ENCODE measurements at regions of chr4 and their contacts with region 1.

Region 1: DNA sequence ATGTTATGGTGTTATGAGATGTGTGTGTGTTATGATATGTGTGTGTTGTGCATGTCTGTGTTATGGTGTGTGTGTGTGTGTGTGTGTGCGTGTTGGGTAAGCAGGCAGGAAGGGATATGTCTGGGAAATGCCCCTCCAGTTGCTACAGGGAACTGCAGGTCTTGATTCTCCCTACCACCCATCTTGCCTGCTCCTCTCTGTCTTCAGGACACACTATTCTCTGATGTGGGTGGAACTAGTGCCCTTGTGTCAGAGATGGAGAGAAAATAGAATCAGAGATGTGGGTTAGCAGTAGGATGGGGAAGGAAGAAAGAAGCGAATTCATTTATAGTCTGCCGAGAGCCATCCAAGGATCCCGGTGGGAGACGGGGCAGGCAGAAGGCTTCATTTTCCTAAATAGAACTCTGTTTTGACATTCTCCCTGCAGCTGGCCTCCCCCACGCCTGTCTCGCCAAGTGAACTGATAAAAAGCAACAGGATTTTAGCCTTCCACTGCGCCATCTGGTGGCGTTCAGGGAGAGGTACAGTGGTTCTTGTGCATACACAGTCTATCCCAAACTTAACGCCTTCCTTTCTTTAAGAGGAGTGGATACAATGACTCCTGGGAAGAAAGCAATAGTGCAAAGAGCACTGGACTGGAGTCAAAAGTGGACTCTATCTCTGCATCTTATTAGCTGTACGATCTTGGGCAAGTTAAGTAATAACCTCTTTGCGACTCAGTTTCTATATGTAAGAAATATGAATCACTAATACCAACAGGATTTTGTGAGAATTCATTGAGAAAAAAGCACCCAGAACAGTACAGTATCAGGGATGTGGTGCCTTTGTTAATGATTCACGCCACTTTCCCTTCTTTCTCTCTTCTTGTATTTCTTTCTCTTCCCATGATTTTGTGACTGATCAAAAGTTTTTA is 14.1 kb upstream of the MGST2 start:
- DNase-seq: peak; percentile 43
- H3K4me3 ChIP-seq: no peak overlapping the region
- H3K27ac ChIP-seq: no peak overlapping the region
- H3K4me1 ChIP-seq: peaks cover 8% of the 10 kb centered on the region
- H3K27me3 ChIP-seq: no peaks in the 10 kb centered on the region
- CTCF ChIP-seq: peak; percentile 91 to 95

Region 2: DNA sequence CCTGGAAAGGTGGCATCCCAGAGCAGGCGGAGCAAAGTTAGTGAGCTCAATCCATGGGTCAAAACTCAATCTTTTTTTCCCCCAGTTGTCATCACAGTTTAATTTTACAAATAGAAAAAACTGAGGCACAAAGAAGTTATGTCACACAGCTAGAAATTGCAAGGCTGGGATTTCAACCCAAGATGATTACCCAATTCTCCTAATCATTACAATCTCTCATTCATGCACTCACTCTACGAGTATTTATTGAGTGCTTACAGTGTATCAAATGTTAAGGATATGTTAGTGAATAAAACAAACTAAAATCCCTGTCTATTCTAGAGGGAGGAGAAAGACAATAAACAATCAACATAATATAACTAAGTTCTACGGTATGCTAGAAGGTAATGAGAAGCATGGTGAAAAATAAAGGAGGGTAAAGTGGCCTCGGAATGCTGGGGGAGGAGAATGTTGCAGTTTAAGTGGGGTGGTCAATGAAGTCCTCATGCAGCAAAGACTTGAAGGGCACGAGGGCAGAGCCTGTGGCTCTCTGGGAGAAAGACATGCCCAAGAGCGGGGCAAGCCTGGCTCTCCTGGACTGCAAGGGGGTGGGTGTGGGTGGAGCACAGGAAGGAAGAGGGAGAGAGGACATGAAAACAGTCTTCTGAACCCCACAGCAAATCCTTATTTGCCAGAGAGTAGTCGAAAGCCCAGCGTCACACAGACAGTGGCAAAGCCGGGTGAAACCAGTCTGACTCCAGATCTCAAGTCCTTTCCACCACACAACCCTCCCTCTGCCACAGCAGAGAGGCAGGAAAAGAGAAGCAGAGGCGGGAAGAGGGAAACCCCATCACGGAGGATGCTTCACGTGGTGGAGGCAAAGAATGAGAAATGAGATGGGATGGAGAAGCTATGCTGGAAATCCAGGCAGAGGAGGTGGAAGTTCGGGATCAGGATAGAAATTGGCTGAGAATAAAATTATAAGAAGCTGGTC is 149.3 kb before region 1 on chr4:
- CTCF ChIA-PET with region 1: no interaction called
- dilution Hi-C with region 1: no loop called
- in situ Hi-C with region 1: no loop called
- intact Hi-C with region 1: loop called (anchors 1 kb)
- DNase-seq: no peak
- H3K4me3 ChIP-seq: no peak overlapping the region
- H3K27ac ChIP-seq: no peak overlapping the region
- H3K4me1 ChIP-seq: no peaks in the 10 kb centered on the region
- H3K27me3 ChIP-seq: no peaks in the 10 kb centered on the region
- CTCF ChIP-seq: no peak

Region 3: GRCh38 chr4:139554893-139555704 is 96.4 kb before region 1 on chr4:
- CTCF ChIA-PET with region 1: interaction called, 3 read pairs
- dilution Hi-C with region 1: no loop called
- in situ Hi-C with region 1: no loop called
- intact Hi-C with region 1: loop called (anchors 2 kb)
- DNase-seq: peak; percentile 81
- H3K4me3 ChIP-seq: peak overlapping the region; percentile 77 to 91 (median 90)
- H3K27ac ChIP-seq: peak overlapping the region; percentile 63
- H3K4me1 ChIP-seq: peaks cover 17% of the 10 kb centered on the region
- H3K27me3 ChIP-seq: peaks cover 5% of the 10 kb centered on the region
- CTCF ChIP-seq: no peak

Region 4: DNA sequence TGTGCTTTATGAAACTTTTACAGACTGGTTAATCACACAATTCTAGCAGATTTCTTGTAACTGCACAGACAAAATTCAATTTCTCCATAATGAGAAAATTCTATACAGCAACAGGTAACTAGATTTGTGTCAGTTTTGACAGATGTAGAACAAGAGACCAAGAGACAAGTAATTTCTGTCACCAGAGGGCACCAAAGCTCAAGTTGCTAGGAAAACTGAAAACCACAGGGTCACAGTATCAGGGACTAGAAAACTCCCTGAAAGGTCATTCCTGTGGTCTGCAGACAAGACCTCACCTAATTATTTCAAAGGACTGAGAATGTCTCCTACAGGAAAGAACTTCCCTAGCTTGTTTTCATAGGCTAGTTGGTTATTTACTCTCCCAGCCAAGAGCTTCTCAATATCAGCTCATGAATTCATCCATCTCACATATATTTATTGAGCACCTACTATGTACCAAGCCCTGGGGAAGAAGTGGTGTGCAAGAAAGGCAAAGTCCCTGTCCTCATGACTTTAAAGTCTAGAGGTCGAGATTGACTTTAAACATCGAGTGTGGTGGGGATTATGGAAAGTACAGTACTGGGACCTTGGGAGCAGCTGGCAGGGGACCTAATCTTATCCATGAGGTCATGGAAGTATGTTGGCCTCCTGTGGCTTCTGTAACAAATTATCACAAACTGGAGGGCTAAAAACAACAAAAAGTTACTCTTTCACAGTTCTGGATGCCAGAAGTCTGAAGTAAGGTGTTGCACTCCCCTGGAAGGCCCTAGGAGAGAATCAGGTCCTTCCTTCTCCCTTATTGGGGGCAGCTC is 47.8 kb before region 1 on chr4:
- CTCF ChIA-PET with region 1: interaction called, 6 read pairs
- dilution Hi-C with region 1: no loop called
- in situ Hi-C with region 1: no loop called
- intact Hi-C with region 1: loop called (anchors 1 kb)
- DNase-seq: peak; percentile 55
- H3K4me3 ChIP-seq: no peak overlapping the region
- H3K27ac ChIP-seq: no peak overlapping the region
- H3K4me1 ChIP-seq: no peaks in the 10 kb centered on the region
- H3K27me3 ChIP-seq: no peaks in the 10 kb centered on the region
- CTCF ChIP-seq: peak; percentile 62 to 73

Region 5: GRCh38 chr4:139619644-139620043 is 31.9 kb before region 1 on chr4:
- CTCF ChIA-PET with region 1: interaction called, 5 read pairs
- dilution Hi-C with region 1: no loop called
- in situ Hi-C with region 1: loop called in 1 of 2 experiments (anchors 5 kb)
- intact Hi-C with region 1: loop called (anchors 1 kb)
- DNase-seq: peak; percentile 30
- H3K4me3 ChIP-seq: no peak overlapping the region
- H3K27ac ChIP-seq: no peak overlapping the region
- H3K4me1 ChIP-seq: no peaks in the 10 kb centered on the region
- H3K27me3 ChIP-seq: no peaks in the 10 kb centered on the region
- CTCF ChIP-seq: peak; percentile 61 to 69

Region 6: DNA sequence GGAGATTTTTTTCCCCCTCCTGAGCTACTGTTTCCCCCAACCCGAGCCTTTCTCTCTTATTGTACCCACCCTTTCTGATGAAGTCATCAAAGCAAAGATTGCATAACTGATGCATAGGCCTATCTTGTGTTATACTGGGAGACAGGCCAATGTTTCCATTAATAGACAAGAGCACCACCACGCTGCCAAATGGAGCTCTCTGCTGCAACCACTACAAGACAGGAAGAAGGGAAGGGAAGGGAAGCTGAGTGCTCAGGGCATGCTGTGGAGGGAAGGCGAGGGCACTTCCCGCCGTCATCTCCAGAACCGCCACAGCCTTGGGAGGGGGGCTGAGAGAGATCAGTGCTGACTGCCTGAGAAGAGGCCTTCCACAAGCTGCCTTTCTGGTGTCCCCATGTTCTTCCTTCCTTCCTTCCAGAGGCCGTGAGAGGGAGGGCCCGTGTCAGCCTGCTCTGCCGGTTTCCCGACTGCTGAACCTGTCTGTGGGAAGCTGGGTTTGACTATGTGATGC is 89.0 kb after region 1 on chr4:
- CTCF ChIA-PET with region 1: interaction called, 24 read pairs
- dilution Hi-C with region 1: no loop called
- in situ Hi-C with region 1: no loop called
- intact Hi-C with region 1: no loop called
- DNase-seq: peak; percentile 59
- H3K4me3 ChIP-seq: no peak overlapping the region
- H3K27ac ChIP-seq: no peak overlapping the region
- H3K4me1 ChIP-seq: no peaks in the 10 kb centered on the region
- H3K27me3 ChIP-seq: peaks cover 7% of the 10 kb centered on the region
- CTCF ChIP-seq: peak in 1 of 2 donors; percentile 54